GM12878 (cell line): ENCODE measurements at regions of chr9 and their contacts with region 1.

Region 1: GRCh38 chr9:37903647-37904444 is at the start of gene SLC25A51:
- DNase-seq: peak; percentile 81
- ATAC-seq: peak; percentile 92
- H3K4me3 ChIP-seq: peak within 1 kb of the TSS; percentile 86
- H3K27ac ChIP-seq: peak within 1 kb of the TSS; percentile 76
- H3K4me1 ChIP-seq: peaks cover 10% of the 10 kb centered on the region
- H3K27me3 ChIP-seq: no peaks in the 10 kb centered on the region
- CTCF ChIP-seq: peak; percentile 91 to 97 (median 95); a peak in 5 of 6 replicates
- EP300 ChIP-seq: peak in 1 of 2 experiments; percentile 59; a peak in 1 of 4 replicates
- POLR2A ChIP-seq: peak; percentile 88
- RAD21 ChIP-seq: peak; percentile 72
- polyA plus RNA-seq, gene SLC25A51: 3.8 to 6.1 TPM

Region 2: GRCh38 chr9:37746848-37747753 is 156.7 kb before region 1 on chr9:
- CTCF ChIA-PET with region 1: interaction called, 15 read pairs
- POLR2A ChIA-PET with region 1: no interaction called
- RAD21 ChIA-PET with region 1: interaction called, 11 read pairs
- SMC1A ChIA-PET with region 1: interaction called, 5 read pairs
- in situ Hi-C with region 1: no loop called
- intact Hi-C with region 1: no loop called
- DNase-seq: peak; percentile 3
- ATAC-seq: peak; percentile 97
- H3K4me3 ChIP-seq: no peak overlapping the region
- H3K27ac ChIP-seq: no peak overlapping the region
- H3K4me1 ChIP-seq: no peaks in the 10 kb centered on the region
- H3K27me3 ChIP-seq: no peaks in the 10 kb centered on the region
- CTCF ChIP-seq: peak; percentile 93 to 97 (median 96)
- EP300 ChIP-seq: no peak
- POLR2A ChIP-seq: no peak
- RAD21 ChIP-seq: peak; percentile 86

Region 3: GRCh38 chr9:37800631-37801286 is 103.1 kb before region 1 on chr9 and contains the start of gene DCAF10:
- CTCF ChIA-PET with region 1: interaction called, 4 read pairs
- POLR2A ChIA-PET with region 1: interaction called, 3 read pairs
- RAD21 ChIA-PET with region 1: interaction called, 4 read pairs
- SMC1A ChIA-PET with region 1: interaction called, 4 read pairs
- in situ Hi-C with region 1: no loop called
- intact Hi-C with region 1: loop called (anchors 5 kb)
- DNase-seq: peak; percentile 40
- ATAC-seq: peak; percentile 89
- H3K4me3 ChIP-seq: peak within 1 kb of the TSS; percentile 80
- H3K27ac ChIP-seq: peak within 1 kb of the TSS; percentile 83
- H3K4me1 ChIP-seq: peaks cover 10% of the 10 kb centered on the region; the same call in 1 of the 2 replicates
- H3K27me3 ChIP-seq: no peaks in the 10 kb centered on the region
- CTCF ChIP-seq: no peak
- EP300 ChIP-seq: 0 out of 4 replicates have a peak, but pooled peaks have one; percentile 17 to 37
- POLR2A ChIP-seq: peak; percentile 95
- RAD21 ChIP-seq: no peak
- polyA plus RNA-seq, gene DCAF10: 3.9 TPM

Region 4: GRCh38 chr9:37976714-37977477 is 73.0 kb after region 1 on chr9:
- CTCF ChIA-PET with region 1: no interaction called
- POLR2A ChIA-PET with region 1: no interaction called
- RAD21 ChIA-PET with region 1: no interaction called
- SMC1A ChIA-PET with region 1: no interaction called
- in situ Hi-C with region 1: no loop called
- intact Hi-C with region 1: no loop called
- DNase-seq: no peak
- ATAC-seq: no peak
- H3K4me3 ChIP-seq: no peak overlapping the region
- H3K27ac ChIP-seq: no peak overlapping the region
- H3K4me1 ChIP-seq: no peaks in the 10 kb centered on the region
- H3K27me3 ChIP-seq: no peaks in the 10 kb centered on the region
- CTCF ChIP-seq: no peak
- EP300 ChIP-seq: no peak
- POLR2A ChIP-seq: no peak
- RAD21 ChIP-seq: no peak

Region 5: DNA sequence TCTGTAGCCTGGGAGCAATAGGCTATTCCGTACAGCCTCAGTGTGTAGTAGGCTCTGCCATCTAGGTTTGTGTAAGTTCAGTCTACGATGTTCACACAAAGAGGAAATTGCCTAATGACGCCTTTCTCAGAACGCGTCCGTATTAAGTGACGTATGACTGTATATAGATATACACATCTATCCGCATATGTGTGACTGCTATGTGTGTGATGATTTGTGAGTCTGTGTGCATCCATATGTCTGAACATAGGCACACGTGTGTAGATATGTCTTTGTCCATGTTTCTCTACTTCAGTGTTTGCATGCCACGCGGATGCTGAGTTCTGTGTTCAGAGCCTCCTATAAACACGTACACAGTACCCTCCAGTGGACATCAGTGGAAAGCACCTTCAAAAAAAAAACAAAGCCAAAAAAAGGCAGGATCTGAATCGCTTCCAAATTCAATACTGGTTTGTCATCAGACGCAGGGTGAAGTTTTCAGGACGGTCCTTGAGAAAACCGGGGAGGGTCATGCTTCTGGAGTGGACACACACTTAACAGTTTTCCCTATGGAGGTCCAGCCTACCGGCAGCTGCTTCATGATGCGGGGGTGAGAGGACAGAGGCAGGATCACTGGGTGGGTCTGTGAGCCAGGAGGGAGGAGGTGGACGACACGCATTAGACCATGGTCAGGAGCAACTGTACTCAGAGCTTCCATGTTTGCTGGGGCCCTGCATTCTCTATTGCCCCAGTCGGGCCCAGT is 459.2 kb after region 1 on chr9:
- CTCF ChIA-PET with region 1: interaction called, 120 read pairs
- POLR2A ChIA-PET with region 1: no interaction called
- RAD21 ChIA-PET with region 1: interaction called, 4 read pairs
- SMC1A ChIA-PET with region 1: interaction called, 3 read pairs
- in situ Hi-C with region 1: no loop called
- intact Hi-C with region 1: loop called (anchors 2 kb)
- DNase-seq: peak; percentile 35
- ATAC-seq: peak; percentile 86
- H3K4me3 ChIP-seq: no peak overlapping the region
- H3K27ac ChIP-seq: no peak overlapping the region
- H3K4me1 ChIP-seq: no peaks in the 10 kb centered on the region
- H3K27me3 ChIP-seq: no peaks in the 10 kb centered on the region
- CTCF ChIP-seq: peak; percentile 50 to 84 (median 57); a peak in 5 of 6 replicates
- EP300 ChIP-seq: no peak
- POLR2A ChIP-seq: no peak
- RAD21 ChIP-seq: peak; percentile 87

Region 6: GRCh38 chr9:38687387-38687842 is 783.6 kb after region 1 on chr9:
- CTCF ChIA-PET with region 1: no interaction called
- POLR2A ChIA-PET with region 1: no interaction called
- RAD21 ChIA-PET with region 1: no interaction called
- SMC1A ChIA-PET with region 1: no interaction called
- in situ Hi-C with region 1: loop called (anchors 25 kb)
- intact Hi-C with region 1: no loop called
- DNase-seq: no peak
- ATAC-seq: peak; percentile 35; the same call in 2 of the 3 replicates
- H3K4me3 ChIP-seq: no peak overlapping the region
- H3K27ac ChIP-seq: no peak overlapping the region
- H3K4me1 ChIP-seq: no peaks in the 10 kb centered on the region
- H3K27me3 ChIP-seq: no peaks in the 10 kb centered on the region
- CTCF ChIP-seq: no peak
- EP300 ChIP-seq: no peak
- POLR2A ChIP-seq: no peak
- RAD21 ChIP-seq: no peak